AG04449 (cell line): ENCODE measurements at regions of chr1 and their contacts with region 1.

Region 1: DNA sequence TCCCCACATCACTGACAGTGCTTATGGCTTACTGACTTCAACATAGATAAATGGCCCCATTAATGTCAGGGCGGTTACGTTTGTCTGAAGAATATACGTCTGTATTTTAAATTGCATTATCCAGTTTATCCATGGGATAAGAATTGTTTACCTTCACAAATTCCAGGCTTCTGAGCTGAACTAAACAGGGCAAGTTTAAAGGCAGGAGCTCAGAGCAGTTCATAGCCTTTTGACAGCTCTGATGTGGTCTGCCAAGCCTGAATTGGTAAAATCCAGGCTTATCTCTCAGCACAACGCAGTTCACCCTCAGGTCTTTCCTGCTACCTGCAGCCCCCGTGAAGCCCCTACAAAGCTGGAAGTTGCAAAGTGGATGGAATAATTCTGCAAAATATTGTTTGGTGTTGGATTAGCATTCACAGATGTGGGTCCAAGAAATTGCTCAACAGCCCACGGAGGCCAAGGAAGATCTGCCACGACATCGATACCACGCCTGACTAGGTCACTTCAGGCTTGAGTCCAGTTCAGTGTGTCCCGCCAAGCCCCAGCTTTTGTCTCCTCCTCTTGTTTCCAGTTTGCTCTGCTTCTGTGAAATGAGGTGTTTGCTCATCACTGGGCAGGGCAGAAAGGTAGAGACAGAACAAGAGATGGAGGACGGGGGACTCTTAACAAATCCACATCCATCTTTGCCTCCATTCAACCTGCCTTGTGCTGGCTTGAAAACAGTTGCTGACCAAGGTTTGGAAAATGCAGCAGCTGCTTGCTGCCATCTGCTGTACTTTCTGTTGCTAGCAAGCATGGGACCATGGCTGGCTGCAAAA is 79.8 kb upstream of the GREM2 start:
- DNase-seq: no peak
- H3K4me3 ChIP-seq: no peak overlapping the region
- CTCF ChIP-seq: peak; percentile 85

Region 2: DNA sequence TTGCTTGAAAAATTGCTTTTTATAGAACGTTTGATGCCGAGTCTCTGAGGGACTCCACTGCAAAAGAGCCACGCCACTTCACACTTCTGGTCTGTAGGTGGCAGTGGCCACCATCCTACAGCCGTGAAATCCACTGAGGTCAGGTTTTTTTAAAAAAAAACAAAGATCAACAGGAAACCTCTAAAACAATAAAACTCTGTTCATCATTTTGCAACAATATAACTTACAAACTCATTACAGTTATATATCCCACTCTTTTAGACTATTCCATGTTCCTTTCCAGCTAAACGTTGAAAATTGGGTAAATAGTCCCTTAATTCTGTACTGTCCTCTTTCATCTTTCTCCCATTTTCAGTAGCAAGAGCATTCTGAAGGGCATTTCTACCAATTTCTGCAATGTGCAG is 664.7 kb before region 1 on chr1:
- CTCF ChIA-PET with region 1: interaction called, 29 read pairs
- POLR2A ChIA-PET with region 1: no interaction called
- DNase-seq: no peak
- H3K4me3 ChIP-seq: no peak overlapping the region
- CTCF ChIP-seq: peak; percentile 80

Region 3: DNA sequence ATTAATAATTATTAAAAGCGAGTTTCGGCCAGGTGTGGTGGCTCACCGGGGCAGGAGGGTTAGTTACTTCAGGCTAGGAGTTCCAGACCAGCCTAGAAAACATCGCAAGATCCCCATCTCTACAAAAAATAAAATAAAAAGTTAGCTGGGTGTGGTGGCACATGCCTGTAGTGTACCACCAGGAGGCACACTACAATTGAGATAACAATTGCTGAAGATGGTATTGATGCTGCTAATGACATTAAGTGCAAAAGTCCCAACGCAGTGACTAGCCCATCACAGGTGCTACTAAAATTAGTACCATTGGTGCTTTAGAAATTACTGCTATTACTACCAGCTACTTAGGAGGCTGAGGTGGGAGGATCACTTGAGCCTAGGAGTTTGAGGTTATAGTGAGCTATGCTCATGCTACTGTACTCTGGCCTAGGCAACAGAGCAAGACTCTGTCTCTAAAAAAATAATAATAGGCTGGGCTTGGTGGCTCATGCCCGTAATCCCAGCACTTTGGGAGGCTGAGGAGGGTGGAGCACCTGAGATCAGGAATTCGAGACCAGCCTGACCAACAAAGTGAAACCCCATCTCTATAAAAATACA is 236.4 kb before region 1 on chr1:
- CTCF ChIA-PET with region 1: interaction called, 26 read pairs
- POLR2A ChIA-PET with region 1: no interaction called
- DNase-seq: no peak
- H3K4me3 ChIP-seq: no peak overlapping the region
- CTCF ChIP-seq: peak; percentile 23

Region 4: DNA sequence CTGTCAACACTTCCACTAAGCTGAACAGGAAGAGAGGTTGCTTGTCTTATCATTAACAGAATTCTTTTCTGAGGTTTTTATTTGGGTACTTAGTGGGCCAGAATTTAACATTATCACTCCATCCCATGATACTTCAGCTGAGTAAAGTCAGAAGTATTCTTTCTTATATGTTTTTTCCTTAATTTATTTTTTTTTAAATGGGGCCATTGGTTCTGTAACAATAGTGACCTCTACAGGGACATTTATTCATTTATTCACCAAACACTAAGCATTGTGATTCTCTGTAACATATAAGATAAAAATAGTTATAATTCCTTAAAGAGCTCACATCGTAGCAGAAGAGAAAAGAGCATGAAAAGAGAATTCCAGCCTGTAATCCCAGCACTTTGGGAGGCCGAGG is 89.5 kb before region 1 on chr1:
- CTCF ChIA-PET with region 1: interaction called, 11 read pairs
- POLR2A ChIA-PET with region 1: no interaction called
- DNase-seq: no peak
- H3K4me3 ChIP-seq: no peak overlapping the region
- CTCF ChIP-seq: no peak

Region 5: DNA sequence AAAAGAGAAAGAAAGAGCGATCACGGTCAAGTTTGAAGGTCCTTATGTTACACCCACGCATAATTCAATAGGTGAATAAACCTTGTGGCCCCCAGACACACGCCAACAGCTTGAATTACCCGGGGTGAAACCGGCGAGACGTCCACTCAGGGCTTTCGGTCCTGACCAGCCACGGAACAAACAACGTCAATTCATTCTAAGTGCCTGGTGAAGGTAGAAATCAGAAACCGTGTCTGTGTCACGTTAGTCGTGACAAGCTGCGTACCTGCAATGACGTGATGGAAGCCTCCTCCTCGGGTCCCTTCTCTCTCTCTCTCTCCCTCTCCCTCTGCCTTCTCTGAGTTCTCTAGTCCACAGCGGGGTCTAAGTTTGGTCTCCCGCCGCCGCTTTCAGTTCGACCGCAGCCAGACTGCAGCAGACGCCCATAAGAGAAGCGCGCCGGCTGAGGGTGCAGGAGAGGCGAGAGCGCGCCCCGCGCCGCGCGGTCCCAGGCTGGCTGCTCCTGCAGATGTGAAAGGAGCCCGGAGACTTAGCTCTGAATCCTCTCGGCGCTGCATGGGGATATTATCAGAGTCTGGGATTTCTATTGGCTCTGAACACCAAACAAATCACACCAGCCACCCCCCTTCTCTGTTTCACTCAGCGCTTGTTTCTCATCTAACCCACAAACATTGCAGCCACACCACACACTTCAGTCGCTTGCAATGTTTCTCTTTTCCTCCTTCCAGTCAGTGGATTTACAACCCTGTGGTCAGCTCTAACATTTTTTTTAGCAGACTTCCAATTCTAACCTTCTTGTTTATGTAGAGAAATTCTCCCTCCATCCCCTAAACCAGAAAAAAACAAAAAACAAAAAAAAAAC is 79.9 kb before region 1 on chr1 and contains the start of gene GREM2:
- CTCF ChIA-PET with region 1: interaction called, 13 read pairs
- POLR2A ChIA-PET with region 1: interaction called, 3 read pairs
- DNase-seq: peak; percentile 69
- H3K4me3 ChIP-seq: peak within 1 kb of the TSS; percentile 69
- CTCF ChIP-seq: no peak

Region 6: GRCh38 chr1:240672132-240672811 is 19.5 kb before region 1 on chr1:
- CTCF ChIA-PET with region 1: interaction called, 10 read pairs
- POLR2A ChIA-PET with region 1: no interaction called
- DNase-seq: no peak
- H3K4me3 ChIP-seq: no peak overlapping the region
- CTCF ChIP-seq: no peak